ENCODE measurements at regions of chr18 and their contacts with region 1.

Region 1: GRCh38 chr18:47595815-47596496 is 334.5 kb downstream of the SMAD2 start:
- DNase-seq: peak; percentile 42
- ATAC-seq: no peak
- H3K4me3 Mint-ChIP-seq: no peak overlapping the region
- H3K27ac Mint-ChIP-seq: no peak overlapping the region
- H3K4me1 Mint-ChIP-seq: no peaks in the 10 kb centered on the region
- H3K27me3 Mint-ChIP-seq: peaks cover 24% of the 10 kb centered on the region
- CTCF ChIP-seq: peak; percentile 59

Region 2: GRCh38 chr18:47485221-47485797 is 110.6 kb before region 1 on chr18:
- CTCF ChIA-PET with region 1: no interaction called
- POLR2A ChIA-PET with region 1: no interaction called
- intact Hi-C with region 1: no loop called
- DNase-seq: no peak
- ATAC-seq: no peak
- H3K4me3 Mint-ChIP-seq: no peak overlapping the region
- H3K27ac Mint-ChIP-seq: no peak overlapping the region
- H3K4me1 Mint-ChIP-seq: no peaks in the 10 kb centered on the region
- H3K27me3 Mint-ChIP-seq: peaks cover 6% of the 10 kb centered on the region
- CTCF ChIP-seq: no peak

Region 3: GRCh38 chr18:47709556-47709955 is 113.6 kb after region 1 on chr18:
- CTCF ChIA-PET with region 1: no interaction called
- POLR2A ChIA-PET with region 1: no interaction called
- intact Hi-C with region 1: no loop called
- DNase-seq: no peak
- ATAC-seq: no peak
- H3K4me3 Mint-ChIP-seq: no peak overlapping the region
- H3K27ac Mint-ChIP-seq: no peak overlapping the region
- H3K4me1 Mint-ChIP-seq: no peaks in the 10 kb centered on the region
- H3K27me3 Mint-ChIP-seq: peaks cover 5% of the 10 kb centered on the region
- CTCF ChIP-seq: no peak

Region 4: DNA sequence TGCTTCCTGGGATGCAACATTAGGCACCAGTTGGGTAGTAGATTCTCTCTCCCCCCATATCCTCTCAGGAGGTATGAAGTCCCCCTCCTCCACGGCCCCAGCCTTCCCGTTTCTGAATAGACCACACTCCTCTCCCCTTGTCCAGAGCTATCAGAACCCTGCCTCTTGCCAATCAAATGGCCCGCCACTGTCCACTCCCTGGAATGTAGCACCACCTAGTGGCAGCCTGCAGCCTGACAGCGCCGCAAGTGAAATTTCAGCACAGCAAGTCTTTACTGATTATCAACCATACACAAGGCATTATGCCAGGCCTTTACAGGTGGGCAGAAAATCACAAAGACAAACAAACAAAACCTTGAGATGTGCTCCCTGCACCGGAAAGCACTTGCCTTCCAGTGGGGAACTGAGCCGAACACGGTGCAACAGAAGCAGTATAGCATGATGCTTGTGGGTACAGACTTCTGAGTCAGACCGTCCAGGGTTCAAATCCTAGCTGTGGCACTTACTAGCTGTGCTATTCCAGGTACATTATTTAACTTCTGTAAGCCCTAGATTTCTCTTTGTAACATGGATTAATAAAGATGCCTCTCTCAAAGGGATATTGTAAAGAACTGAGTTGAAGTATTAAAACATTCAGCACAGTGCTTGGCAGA is 160.5 kb after region 1 on chr18:
- CTCF ChIA-PET with region 1: interaction called, 3 read pairs
- POLR2A ChIA-PET with region 1: no interaction called
- intact Hi-C with region 1: loop called (anchors 5 kb)
- DNase-seq: peak; percentile 70
- ATAC-seq: no peak
- H3K4me3 Mint-ChIP-seq: no peak overlapping the region
- H3K27ac Mint-ChIP-seq: no peak overlapping the region
- H3K4me1 Mint-ChIP-seq: no peaks in the 10 kb centered on the region
- H3K27me3 Mint-ChIP-seq: peaks cover 19% of the 10 kb centered on the region
- CTCF ChIP-seq: peak; percentile 74

Measured in activated CD8-positive, alpha-beta T cell treated with anti-CD3 and anti-CD28 coated beads for 36 hours (primary cell).